ENCODE measurements at regions of chr20 and their contacts with region 1.

Region 1: GRCh38 chr20:37270576-37271420 is 9.2 kb upstream of the GHRH start:
- DNase-seq: peak; percentile 20
- ATAC-seq: peak; percentile 74
- H3K4me3 Mint-ChIP-seq: peak overlapping the region; percentile 11
- H3K27ac Mint-ChIP-seq: peak overlapping the region; percentile 72
- H3K4me1 Mint-ChIP-seq: peaks cover 52% of the 10 kb centered on the region
- H3K27me3 Mint-ChIP-seq: no peaks in the 10 kb centered on the region
- CTCF ChIP-seq: no peak

Region 2: GRCh38 chr20:37192137-37192854 is 78.5 kb before region 1 on chr20:
- CTCF ChIA-PET with region 1: interaction called, 6 read pairs
- POLR2A ChIA-PET with region 1: no interaction called
- intact Hi-C with region 1: loop called (anchors 2 kb)
- DNase-seq: peak; percentile 46
- ATAC-seq: peak; percentile 84
- H3K4me3 Mint-ChIP-seq: no peak overlapping the region
- H3K27ac Mint-ChIP-seq: no peak overlapping the region
- H3K4me1 Mint-ChIP-seq: peaks cover 57% of the 10 kb centered on the region
- H3K27me3 Mint-ChIP-seq: no peaks in the 10 kb centered on the region
- CTCF ChIP-seq: peak; percentile 54

Region 3: DNA sequence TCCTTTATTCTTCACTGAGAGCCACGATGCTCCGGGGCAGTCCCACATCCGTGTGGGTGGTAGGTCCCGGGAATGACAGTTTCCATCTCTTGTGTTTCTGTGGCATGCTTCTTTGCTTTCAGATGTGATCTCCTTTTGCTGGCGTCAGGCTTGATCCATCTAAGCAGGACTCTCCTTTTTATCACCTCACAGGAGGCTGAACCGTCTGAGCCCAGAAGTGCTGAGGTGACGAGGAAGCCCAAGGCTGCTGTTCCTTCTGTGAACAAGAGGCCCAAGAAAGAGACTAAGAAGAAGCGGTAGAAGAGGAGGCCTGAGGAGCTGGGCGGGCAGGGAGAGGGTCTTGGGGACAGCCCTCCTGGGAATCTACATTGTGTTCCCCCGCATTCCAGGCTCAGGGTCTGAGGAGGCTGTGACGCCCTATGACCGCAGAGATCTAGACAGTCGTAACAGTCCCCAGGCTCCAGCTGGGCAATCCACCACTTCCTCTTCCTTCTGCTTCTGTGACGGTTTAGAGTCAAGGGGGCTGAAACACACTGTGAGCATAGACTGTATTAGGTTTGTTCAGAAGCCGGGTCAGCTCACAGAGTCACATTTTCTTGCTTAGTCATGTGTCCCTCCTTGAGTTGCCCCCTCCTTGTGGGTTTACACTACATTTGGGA is 45.4 kb after region 1 on chr20:
- CTCF ChIA-PET with region 1: interaction called, 3 read pairs
- POLR2A ChIA-PET with region 1: interaction called, 9 read pairs
- intact Hi-C with region 1: loop called (anchors 2 kb)
- DNase-seq: peak; percentile 62
- ATAC-seq: peak; percentile 90
- H3K4me3 Mint-ChIP-seq: peak overlapping the region; percentile 59
- H3K27ac Mint-ChIP-seq: peak overlapping the region; percentile 92
- H3K4me1 Mint-ChIP-seq: peaks cover 56% of the 10 kb centered on the region
- H3K27me3 Mint-ChIP-seq: no peaks in the 10 kb centered on the region
- CTCF ChIP-seq: no peak

Region 4: DNA sequence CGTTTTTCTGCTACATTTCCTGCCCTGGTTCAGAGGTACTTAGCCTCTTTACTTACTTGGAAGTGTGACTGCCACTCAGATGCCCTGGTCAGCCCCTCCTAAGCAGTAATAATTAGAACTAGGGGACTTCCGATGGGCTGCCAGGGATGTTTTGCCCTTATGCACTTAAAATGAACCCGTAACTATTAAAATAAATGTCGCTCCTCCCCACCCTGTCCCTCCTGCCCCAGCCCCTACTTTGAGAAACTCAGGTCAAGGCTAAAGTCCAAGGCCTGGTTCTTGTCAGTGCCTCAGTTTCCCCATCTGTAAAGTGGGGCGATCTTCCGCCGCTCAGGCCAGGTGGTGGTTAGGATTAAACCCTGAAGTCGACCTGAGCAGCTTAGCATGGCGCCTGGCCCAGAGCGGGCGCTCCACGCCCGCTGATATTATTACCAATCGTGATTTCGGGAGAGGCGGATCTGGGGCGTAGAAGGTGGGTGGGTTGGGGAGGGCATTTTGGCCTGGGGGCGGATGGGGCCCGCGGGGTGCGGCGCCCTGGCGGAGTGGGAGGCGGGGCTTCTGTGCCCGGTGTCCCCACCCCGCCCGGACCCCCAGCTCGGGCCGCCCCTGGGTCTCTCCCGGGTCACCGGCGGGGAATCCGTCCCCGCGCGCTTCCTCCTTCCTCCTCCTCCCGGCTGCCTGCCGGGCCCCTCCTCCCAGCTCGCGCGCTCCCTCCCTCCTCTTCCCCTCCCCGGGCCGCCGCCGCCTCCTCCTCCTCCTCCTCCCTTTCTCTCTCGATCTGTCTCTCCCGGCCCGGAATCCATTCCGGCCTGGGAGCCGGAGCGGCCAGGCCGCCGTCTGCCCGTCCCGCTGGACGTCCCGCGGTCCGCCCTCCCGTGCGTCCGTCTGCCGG is 74.8 kb after region 1 on chr20 and contains the start of gene SRC:
- CTCF ChIA-PET with region 1: interaction called, 3 read pairs
- POLR2A ChIA-PET with region 1: interaction called, 12 read pairs
- intact Hi-C with region 1: no loop called
- DNase-seq: peak; percentile 56
- ATAC-seq: peak; percentile 65
- H3K4me3 Mint-ChIP-seq: peak within 1 kb of the TSS; percentile 84
- H3K27ac Mint-ChIP-seq: peak within 1 kb of the TSS; percentile 80
- H3K4me1 Mint-ChIP-seq: peaks cover 54% of the 10 kb centered on the region
- H3K27me3 Mint-ChIP-seq: no peaks in the 10 kb centered on the region
- CTCF ChIP-seq: no peak
- total RNA-seq, gene SRC: 62.9 and 72.7 TPM in 2 replicates

Region 5: DNA sequence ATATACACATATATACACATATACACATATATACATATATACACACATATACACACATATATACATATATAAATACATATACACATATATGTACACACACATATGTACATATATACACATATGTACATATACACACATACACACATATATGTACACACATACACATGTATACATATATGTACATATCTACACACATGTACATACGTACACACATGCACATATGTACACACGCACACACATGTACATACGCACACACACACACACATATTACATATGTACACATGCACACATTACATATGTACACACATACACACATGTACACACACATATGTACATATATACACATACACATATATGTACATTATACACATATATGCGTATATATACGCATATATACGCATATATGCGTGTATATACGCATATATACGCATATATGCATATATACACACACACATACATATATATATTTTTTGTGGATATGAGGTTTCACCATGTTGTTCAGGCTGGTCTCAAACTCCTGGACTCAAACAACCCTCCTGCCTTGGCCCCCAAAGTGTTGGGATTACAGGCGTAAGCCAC is 102.3 kb after region 1 on chr20:
- CTCF ChIA-PET with region 1: no interaction called
- POLR2A ChIA-PET with region 1: no interaction called
- intact Hi-C with region 1: no loop called
- DNase-seq: no peak
- ATAC-seq: no peak
- H3K4me3 Mint-ChIP-seq: no peak overlapping the region
- H3K27ac Mint-ChIP-seq: no peak overlapping the region
- H3K4me1 Mint-ChIP-seq: peaks cover 41% of the 10 kb centered on the region
- H3K27me3 Mint-ChIP-seq: no peaks in the 10 kb centered on the region
- CTCF ChIP-seq: no peak

Region 6: DNA sequence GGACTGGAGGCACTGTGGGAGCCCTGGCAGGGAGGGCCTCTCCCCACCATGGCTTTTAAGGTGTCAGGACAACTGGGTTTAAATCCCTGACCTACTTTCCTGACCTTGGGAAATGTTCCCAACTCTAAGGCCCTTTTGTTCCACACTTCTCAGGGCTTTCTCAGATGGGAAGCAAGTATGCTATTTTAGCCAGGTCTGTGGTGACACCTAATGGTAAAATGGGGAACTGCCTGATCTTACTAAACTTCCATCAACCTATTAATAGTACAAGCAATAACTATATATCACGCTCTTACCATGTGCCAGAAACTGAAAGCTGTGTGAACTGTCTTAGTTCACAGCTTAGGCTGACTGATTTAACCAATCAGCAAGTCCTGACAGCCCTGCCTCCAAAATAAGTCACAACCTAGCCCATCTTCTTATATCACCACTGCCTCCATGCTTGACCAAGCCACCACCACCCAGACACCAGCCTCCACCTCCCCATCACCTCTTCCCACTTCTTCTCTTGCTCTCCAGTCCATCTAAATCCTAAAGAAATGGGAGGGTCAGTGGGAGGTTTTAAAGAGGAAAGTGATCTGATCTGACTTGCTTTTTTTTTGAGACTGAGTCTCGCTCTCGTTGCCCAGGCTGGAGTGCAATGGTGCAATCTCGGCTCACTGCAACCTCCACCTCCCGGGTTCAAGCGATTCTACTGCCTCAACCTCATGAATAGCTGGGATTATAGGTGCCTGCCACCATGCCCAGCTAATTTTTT is 263.8 kb after region 1 on chr20:
- CTCF ChIA-PET with region 1: interaction called, 42 read pairs
- POLR2A ChIA-PET with region 1: interaction called, 13 read pairs
- intact Hi-C with region 1: loop called (anchors 1 kb)
- DNase-seq: no peak
- ATAC-seq: peak; percentile 99
- H3K4me3 Mint-ChIP-seq: no peak overlapping the region
- H3K27ac Mint-ChIP-seq: peak overlapping the region; percentile 38
- H3K4me1 Mint-ChIP-seq: peaks cover 9% of the 10 kb centered on the region
- H3K27me3 Mint-ChIP-seq: peaks cover 10% of the 10 kb centered on the region
- CTCF ChIP-seq: peak; percentile 38